ENCODE measurements at regions of chr9 and their contacts with region 1.

Region 1: GRCh38 chr9:71897577-71897976 is 13.4 kb downstream of the ABHD17B start:
- DNase-seq: peak; percentile 33
- H3K4me3 Mint-ChIP-seq: no peak overlapping the region
- H3K27ac Mint-ChIP-seq: no peak overlapping the region
- H3K4me1 Mint-ChIP-seq: peaks cover 66% of the 10 kb centered on the region
- H3K27me3 Mint-ChIP-seq: no peaks in the 10 kb centered on the region

Region 2: DNA sequence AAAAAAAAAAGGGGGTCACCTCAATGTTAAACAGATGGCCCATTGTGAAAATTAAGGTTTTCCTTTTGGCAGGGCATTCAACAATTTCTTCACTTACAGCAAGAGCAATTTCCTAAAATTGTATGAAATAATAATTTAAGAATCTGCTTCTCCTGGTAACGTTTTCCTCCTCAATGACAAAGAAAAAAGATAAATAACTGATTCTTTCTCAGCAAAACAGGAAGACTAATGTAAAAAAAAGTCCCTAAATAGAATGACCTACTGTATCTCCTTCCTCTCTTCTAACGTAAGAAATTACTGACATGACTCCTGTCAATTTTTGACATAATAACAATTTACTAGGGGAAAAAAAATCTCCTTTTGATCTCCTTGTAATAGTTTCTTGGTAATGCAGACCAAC is 12.1 kb before region 1 on chr9:
- CTCF ChIA-PET with region 1: no interaction called
- intact Hi-C with region 1: loop called (anchors 1 kb)
- DNase-seq: no peak
- H3K4me3 Mint-ChIP-seq: no peak overlapping the region
- H3K27ac Mint-ChIP-seq: no peak overlapping the region
- H3K4me1 Mint-ChIP-seq: peaks cover 33% of the 10 kb centered on the region
- H3K27me3 Mint-ChIP-seq: no peaks in the 10 kb centered on the region

Measured in activated naive CD4-positive, alpha-beta T cell treated with anti-CD3 and anti-CD28 coated beads for 36 hours (primary cell).